ENCODE measurements at regions of chr6 and their contacts with region 1.

Region 1: GRCh38 chr6:26568601-26569432 is 27.9 kb upstream of the ABT1 start:
- DNase-seq: peak; percentile 98
- H3K4me3 Mint-ChIP-seq: peak overlapping the region; percentile 88
- H3K27ac Mint-ChIP-seq: peak overlapping the region; percentile 93
- H3K4me1 Mint-ChIP-seq: peaks cover 38% of the 10 kb centered on the region
- H3K27me3 Mint-ChIP-seq: peaks cover 26% of the 10 kb centered on the region

Region 2: GRCh38 chr6:26223650-26224546 is 344.9 kb before region 1 on chr6:
- CTCF ChIA-PET with region 1: no interaction called
- DNase-seq: peak; percentile 82
- H3K4me3 Mint-ChIP-seq: no peak overlapping the region
- H3K27ac Mint-ChIP-seq: no peak overlapping the region
- H3K4me1 Mint-ChIP-seq: peaks cover 41% of the 10 kb centered on the region
- H3K27me3 Mint-ChIP-seq: no peaks in the 10 kb centered on the region

Region 3: DNA sequence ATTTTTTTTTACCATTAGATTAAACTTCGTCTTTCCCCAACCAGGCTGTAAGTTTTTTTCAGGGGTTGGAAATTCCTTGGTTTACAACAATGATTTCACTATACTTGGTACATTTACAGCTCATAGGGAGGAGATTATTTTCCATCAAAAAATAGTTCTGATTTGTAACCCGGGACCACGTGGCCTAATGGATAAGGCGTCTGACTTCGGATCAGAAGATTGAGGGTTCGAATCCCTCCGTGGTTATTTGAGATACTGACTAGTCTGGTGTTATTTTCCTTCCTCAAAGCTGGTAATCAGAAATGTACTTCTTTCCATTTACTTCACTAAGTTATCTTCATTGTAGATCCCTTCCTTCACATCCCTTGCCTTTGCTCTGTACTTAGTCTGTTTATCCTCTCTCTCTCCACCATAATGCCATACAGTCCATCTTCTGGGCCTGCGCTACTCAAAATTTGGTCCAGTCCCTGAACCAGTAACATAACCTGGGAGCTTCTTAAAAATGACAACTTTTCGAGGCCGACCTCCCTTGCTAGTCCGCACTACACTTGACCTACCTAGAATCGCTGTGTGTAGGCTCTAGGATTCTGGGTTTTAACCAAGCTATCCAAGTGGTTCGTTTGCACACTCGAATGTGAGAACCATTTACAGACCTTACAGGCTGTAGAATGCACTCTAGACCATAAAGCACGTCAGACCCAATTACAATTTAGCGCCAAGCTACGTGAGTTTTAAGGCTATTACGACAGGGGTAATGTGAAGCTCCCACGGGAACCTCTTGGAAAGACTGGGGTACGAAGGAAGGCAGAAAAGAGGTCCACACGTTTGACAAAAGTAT is 246.0 kb before region 1 on chr6:
- CTCF ChIA-PET with region 1: interaction called, 13 read pairs
- DNase-seq: peak; percentile 57
- H3K4me3 Mint-ChIP-seq: peak overlapping the region; percentile 76
- H3K27ac Mint-ChIP-seq: peak overlapping the region; percentile 55
- H3K4me1 Mint-ChIP-seq: peaks cover 46% of the 10 kb centered on the region
- H3K27me3 Mint-ChIP-seq: peaks cover 69% of the 10 kb centered on the region

Region 4: GRCh38 chr6:26439657-26440056 is 129.2 kb before region 1 on chr6:
- CTCF ChIA-PET with region 1: no interaction called
- DNase-seq: no peak
- H3K4me3 Mint-ChIP-seq: peak overlapping the region; percentile 92
- H3K27ac Mint-ChIP-seq: peak overlapping the region; percentile 97
- H3K4me1 Mint-ChIP-seq: peaks cover 42% of the 10 kb centered on the region
- H3K27me3 Mint-ChIP-seq: no peaks in the 10 kb centered on the region

Region 5: DNA sequence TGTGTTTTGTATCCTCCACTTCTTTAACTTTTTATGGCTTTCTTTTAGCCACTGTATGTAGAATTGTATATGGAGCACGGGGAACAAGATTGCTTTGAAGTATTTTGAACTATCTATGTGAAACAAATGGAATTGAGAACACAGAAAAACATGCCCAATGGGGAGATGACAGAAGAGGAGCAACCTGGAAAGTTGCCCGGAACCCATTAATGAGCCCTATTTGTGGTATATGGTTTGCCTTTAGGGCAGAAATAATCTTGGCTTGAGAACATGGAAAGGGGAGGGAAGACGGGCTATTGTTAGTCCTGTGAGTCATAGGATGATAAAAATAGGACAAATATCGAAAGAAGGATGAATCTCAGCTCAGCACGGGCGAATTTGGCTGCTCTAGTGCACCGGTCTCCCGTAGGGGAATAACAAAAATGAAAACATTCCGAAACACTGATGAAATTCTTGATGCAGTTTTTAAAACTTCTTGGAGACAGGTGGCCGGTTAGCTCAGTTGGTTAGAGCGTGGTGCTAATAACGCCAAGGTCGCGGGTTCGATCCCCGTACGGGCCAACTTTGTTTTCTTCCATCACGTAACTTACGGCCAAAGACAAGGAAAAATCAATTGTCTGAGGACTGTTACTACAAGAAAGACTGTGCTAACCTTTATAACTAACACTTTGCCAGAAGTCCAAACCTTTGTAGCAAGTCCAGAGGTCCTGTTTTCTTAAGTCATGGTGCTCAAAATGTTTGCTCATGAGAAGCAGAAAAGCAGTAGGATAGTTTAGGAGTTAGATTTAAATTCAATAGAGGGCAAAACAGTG is 15.0 kb before region 1 on chr6:
- CTCF ChIA-PET with region 1: interaction called, 11 read pairs
- DNase-seq: peak; percentile 82
- H3K4me3 Mint-ChIP-seq: no peak overlapping the region
- H3K27ac Mint-ChIP-seq: no peak overlapping the region
- H3K4me1 Mint-ChIP-seq: peaks cover 30% of the 10 kb centered on the region
- H3K27me3 Mint-ChIP-seq: peaks cover 6% of the 10 kb centered on the region

Region 6: GRCh38 chr6:26596579-26597388 is 28.0 kb after region 1 on chr6 and contains the start of gene ABT1:
- CTCF ChIA-PET with region 1: interaction called, 115 read pairs
- DNase-seq: peak; percentile 98
- H3K4me3 Mint-ChIP-seq: no peak within 1 kb of the TSS
- H3K27ac Mint-ChIP-seq: no peak within 1 kb of the TSS
- H3K4me1 Mint-ChIP-seq: peaks cover 43% of the 10 kb centered on the region
- H3K27me3 Mint-ChIP-seq: peaks cover 31% of the 10 kb centered on the region

Region 7: DNA sequence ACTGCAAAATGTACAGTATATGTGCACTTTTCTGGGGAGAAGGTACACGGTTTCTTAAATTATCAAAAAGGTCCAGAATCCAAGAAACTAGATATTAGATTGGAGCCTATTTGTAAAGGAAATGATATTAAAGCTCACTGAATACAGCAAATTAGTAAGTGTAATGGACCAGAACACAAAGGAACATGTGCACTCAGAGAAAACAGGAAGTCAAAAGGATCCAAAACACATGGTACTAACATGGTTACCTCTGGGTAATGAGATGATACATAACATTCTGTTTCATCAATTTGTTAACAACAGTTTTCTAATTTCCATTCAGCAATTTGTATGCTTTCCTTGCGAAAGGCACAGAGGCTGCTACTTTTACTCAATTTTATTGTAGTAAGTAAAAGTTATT is 72.0 kb after region 1 on chr6:
- CTCF ChIA-PET with region 1: no interaction called
- DNase-seq: no peak
- H3K4me3 Mint-ChIP-seq: no peak overlapping the region
- H3K27ac Mint-ChIP-seq: no peak overlapping the region
- H3K4me1 Mint-ChIP-seq: no peaks in the 10 kb centered on the region
- H3K27me3 Mint-ChIP-seq: no peaks in the 10 kb centered on the region